ENCODE measurements at regions of chr20 and their contacts with region 1.

Region 1: DNA sequence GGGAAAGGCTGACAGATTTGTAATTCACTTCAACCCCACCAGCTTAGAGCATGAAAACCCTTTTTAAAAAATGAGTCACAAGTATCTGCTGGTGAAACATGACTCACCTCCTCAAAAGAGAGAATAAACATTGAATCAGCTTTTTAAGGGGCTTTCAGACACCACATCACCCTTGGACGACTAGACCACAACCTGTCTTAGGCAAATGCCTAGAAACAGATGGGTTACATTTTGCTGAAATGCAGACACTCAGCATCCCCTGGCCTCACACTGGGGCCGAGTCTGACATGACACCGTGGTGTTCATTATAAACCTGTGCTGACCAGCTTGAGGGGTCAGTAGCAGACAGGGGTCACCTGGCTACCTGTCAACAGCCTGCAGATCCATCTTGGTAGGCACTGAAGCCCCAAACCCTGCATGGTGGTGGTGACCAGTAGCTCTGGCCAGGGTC is 175.3 kb upstream of the CST7 start:
- DNase-seq: peak; percentile 85
- H3K4me3 ChIP-seq: no peak overlapping the region
- H3K27ac ChIP-seq: no peak overlapping the region
- H3K4me1 ChIP-seq: peaks cover 5% of the 10 kb centered on the region; the same call in 1 of the 2 replicates
- H3K27me3 ChIP-seq: no peaks in the 10 kb centered on the region

Region 2: GRCh38 chr20:24303381-24303780 is 470.4 kb before region 1 on chr20:
- in situ Hi-C with region 1: loop called (anchors 10 kb)
- DNase-seq: peak; percentile 29
- H3K4me3 ChIP-seq: no peak overlapping the region
- H3K27ac ChIP-seq: no peak overlapping the region
- H3K4me1 ChIP-seq: no peaks in the 10 kb centered on the region
- H3K27me3 ChIP-seq: peaks cover 3% of the 10 kb centered on the region